Activated CD8-positive, alpha-beta T cell treated with anti-CD3 and anti-CD28 coated beads for 36 hours (primary cell): ENCODE measurements at regions of chr22 and their contacts with region 1.

Region 1: DNA sequence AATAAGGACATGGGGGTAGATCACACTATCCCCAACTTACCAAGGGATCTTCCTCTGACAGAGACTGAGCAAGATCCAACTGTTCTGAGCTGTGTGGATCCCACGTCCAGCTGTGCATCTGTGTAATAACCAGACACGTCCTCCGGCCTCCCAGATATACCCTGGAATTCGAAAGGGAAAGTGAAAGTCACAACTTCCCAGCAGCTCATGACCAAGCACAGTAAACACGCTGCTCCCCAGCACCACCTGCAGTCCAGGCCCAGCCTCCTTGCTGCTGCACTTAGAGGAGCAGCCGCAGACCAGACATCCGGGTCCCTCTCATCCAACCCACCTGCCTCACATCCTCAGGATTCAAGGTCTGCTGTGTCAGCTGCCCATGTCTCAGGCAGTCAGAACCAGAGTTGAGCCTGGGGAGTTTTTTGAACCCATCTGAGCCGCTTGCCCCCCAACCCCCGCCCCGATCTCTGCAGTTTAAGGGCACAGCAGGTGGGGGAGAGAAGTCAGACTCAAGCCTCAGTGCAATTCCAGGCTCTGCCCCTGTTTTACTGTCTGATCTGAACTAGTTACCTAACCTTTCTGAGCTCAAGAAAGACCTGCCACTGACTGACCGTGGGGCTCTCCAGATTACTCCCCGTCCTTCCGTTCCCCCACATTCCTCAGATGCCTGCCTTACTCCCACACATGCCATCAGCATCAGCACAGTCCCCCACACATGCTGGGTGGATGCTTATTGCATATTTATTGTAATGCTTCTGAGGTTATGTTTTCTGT is at the start of gene APOL2:
- DNase-seq: peak; percentile 93
- ATAC-seq: peak; percentile 95
- H3K4me3 Mint-ChIP-seq: peak within 1 kb of the TSS; percentile 98
- H3K27ac Mint-ChIP-seq: peak within 1 kb of the TSS; percentile 97
- H3K4me1 Mint-ChIP-seq: peaks cover 49% of the 10 kb centered on the region
- H3K27me3 Mint-ChIP-seq: no peaks in the 10 kb centered on the region
- CTCF ChIP-seq: peak; percentile 39
- total RNA-seq, gene APOL2: 45.4 to 49.7 TPM

Region 2: GRCh38 chr22:36081023-36081431 is 158.6 kb before region 1 on chr22:
- CTCF ChIA-PET with region 1: no interaction called
- POLR2A ChIA-PET with region 1: no interaction called
- intact Hi-C with region 1: no loop called
- DNase-seq: no peak
- ATAC-seq: no peak
- H3K4me3 Mint-ChIP-seq: no peak overlapping the region
- H3K27ac Mint-ChIP-seq: no peak overlapping the region
- H3K4me1 Mint-ChIP-seq: no peaks in the 10 kb centered on the region
- H3K27me3 Mint-ChIP-seq: no peaks in the 10 kb centered on the region
- CTCF ChIP-seq: no peak

Region 3: DNA sequence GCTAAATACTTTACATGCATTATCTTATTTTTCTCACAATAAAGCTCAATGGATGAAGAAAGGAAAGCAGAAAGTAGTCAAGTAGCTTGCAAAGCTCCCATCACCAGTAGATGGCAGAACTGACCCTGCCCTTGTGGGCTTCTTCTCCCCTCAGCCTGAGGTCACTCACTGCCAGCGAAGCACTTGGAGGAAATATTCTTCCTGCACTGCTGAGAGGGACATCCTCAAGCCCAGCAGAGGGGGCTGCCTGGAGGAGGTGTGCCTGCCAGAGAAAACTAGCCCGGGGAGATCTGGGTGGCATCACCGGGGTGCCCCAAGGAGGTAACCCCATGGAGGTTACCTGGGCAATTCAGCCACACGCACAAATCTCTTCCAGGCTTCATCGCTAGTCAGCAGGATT is 44.6 kb before region 1 on chr22:
- CTCF ChIA-PET with region 1: interaction called, 18 read pairs
- POLR2A ChIA-PET with region 1: interaction called, 3 read pairs
- intact Hi-C with region 1: no loop called
- DNase-seq: peak; percentile 70
- ATAC-seq: peak; percentile 65
- H3K4me3 Mint-ChIP-seq: no peak overlapping the region
- H3K27ac Mint-ChIP-seq: no peak overlapping the region
- H3K4me1 Mint-ChIP-seq: peaks cover 27% of the 10 kb centered on the region
- H3K27me3 Mint-ChIP-seq: no peaks in the 10 kb centered on the region
- CTCF ChIP-seq: peak; percentile 76

Region 4: DNA sequence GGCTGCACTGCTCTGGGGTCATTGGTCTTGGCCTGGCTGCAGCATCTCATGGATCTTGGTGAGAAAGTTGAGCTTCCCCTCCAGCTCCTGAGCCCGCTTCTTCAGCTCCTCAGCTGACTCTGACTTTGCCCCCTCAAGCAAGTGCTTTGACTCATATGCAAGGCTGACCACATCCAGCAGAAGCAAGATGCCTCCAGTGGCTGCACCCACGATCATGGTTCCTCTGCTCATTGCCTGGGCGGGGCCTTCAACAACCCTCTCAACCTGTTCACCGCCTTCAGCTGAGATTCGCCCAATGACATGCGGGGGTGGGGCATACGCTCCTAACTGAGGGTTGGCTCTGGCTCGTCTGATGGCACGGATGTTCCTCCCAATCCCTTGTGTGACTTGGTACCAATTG is 12.2 kb before region 1 on chr22:
- CTCF ChIA-PET with region 1: interaction called, 10 read pairs
- POLR2A ChIA-PET with region 1: interaction called, 10 read pairs
- intact Hi-C with region 1: no loop called
- DNase-seq: peak; percentile 45
- ATAC-seq: peak; percentile 78
- H3K4me3 Mint-ChIP-seq: no peak overlapping the region
- H3K27ac Mint-ChIP-seq: no peak overlapping the region
- H3K4me1 Mint-ChIP-seq: no peaks in the 10 kb centered on the region
- H3K27me3 Mint-ChIP-seq: no peaks in the 10 kb centered on the region
- CTCF ChIP-seq: no peak

Region 5: DNA sequence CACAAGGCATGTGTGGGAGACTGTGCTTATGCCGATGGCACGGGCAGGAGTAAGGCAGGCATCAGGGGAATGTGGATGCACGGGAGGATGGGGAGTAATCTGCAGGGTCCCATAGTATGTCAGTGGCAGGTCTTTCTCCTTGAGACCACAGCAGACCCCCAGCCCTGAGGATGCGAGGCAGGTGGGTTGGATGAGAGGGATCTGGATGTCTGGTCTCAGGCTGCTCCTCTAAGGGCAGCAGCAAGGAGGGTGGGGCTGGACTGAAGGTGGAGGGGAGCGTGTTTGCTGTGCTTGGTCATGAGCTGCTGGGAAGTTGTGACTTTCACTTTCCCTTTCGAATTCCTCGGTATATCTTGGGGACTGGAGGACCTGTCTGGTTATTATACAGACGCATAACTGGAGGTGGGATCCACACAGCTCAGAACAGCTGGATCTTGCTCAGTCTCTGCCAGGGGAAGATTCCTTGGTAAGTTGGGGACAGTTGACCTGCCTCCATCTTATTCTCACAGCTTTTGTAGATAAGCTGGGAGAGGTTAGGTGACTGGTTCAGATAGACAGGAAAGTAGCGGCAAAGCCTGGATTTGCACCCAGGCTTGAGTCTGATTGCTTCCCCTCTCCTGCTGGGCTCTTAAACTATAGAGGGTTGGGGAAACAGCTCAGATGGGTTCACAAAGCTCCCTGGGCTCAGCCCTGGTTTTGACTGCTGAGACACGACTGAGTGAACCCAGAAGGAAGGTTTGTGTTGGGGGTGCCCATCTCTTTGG is 13.3 kb after region 1 on chr22 and contains the start of gene APOL1:
- CTCF ChIA-PET with region 1: interaction called, 19 read pairs
- POLR2A ChIA-PET with region 1: interaction called, 24 read pairs
- intact Hi-C with region 1: no loop called
- DNase-seq: peak; percentile 58
- ATAC-seq: peak; percentile 93
- H3K4me3 Mint-ChIP-seq: peak within 1 kb of the TSS; percentile 83
- H3K27ac Mint-ChIP-seq: peak within 1 kb of the TSS; percentile 94
- H3K4me1 Mint-ChIP-seq: peaks cover 50% of the 10 kb centered on the region
- H3K27me3 Mint-ChIP-seq: no peaks in the 10 kb centered on the region
- CTCF ChIP-seq: no peak
- total RNA-seq, gene APOL1: 13.8 to 17.1 TPM

Region 6: DNA sequence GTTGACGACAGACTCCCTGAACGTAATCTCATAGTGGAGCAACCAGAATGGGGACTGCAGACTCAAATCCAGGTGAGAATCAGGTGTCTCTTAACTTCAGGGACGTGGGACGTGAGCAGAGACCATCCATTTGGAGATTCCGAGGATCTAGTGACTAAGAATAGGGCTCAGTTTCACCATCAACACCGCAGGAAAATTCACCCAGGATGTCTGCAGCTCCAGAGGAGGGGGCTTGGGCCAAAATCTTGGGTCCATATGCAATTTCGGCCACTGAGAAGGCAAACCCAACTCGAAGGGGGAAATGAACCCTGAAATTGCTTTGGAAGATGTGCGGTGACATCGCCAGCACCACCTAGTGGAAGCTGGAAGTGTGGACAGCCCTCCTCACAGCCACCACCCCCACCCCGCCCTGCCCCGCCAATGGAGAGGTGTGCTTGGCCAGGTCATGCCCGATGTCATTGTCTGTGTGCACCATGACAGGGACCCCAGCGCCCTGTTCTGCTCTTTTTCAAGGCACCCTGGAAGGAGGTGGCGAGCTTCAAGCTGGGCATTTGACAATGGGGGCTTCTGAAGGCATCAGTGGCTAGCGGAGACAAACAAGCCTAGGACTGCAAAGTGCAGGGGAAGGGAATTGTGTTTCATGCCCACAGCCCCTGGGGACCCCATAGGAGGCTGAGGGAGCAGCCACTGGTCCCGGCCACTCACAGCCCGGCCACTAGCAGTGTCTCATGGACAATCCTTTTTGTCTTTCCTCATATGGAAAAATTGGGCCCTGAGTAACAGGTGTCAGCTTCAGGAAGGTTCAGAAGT is 38.1 kb after region 1 on chr22:
- CTCF ChIA-PET with region 1: interaction called, 35 read pairs
- POLR2A ChIA-PET with region 1: interaction called, 4 read pairs
- intact Hi-C with region 1: no loop called
- DNase-seq: peak; percentile 83
- ATAC-seq: peak; percentile 88
- H3K4me3 Mint-ChIP-seq: no peak overlapping the region
- H3K27ac Mint-ChIP-seq: peak overlapping the region; percentile 22
- H3K4me1 Mint-ChIP-seq: peaks cover 24% of the 10 kb centered on the region
- H3K27me3 Mint-ChIP-seq: no peaks in the 10 kb centered on the region
- CTCF ChIP-seq: peak; percentile 71

Region 7: DNA sequence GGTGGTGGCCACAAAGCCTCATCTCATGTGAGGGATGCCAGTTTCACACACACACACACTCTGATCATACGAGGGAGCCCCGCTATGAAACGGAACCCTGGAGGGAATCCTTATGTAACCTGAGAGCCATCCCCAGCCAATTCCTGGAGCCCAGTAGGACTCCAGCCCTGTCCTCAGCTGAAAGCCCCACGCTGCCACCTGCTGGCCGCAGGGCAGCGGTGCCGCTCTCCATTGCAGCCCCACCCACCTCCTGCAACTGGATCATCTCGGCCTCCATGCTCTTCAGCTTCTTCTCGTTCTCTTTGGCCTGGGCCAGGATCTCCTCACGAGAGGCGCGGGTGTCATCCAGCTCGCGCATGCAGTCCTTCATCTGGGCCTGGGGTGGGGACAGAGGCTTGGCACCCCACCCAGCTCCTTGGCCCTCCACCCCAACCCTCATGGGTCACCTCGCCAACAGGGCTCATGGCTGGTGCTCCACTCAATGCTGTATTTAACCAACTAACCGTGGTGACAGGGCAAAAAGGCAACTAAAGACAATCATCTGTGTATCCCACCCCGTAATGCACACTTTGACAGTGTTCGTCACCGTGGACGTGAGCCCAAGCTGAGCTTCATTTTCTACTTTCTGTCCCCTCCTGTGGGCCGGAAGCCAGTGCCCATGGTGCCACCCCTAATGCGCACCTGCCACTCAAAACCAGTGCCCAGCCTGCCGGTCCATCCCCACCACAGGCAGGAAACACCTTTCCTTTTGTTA is 47.1 kb after region 1 on chr22:
- CTCF ChIA-PET with region 1: interaction called, 16 read pairs
- POLR2A ChIA-PET with region 1: interaction called, 4 read pairs
- intact Hi-C with region 1: no loop called
- DNase-seq: peak; percentile 75
- ATAC-seq: peak; percentile 91
- H3K4me3 Mint-ChIP-seq: no peak overlapping the region
- H3K27ac Mint-ChIP-seq: peak overlapping the region; percentile 44
- H3K4me1 Mint-ChIP-seq: peaks cover 18% of the 10 kb centered on the region
- H3K27me3 Mint-ChIP-seq: no peaks in the 10 kb centered on the region
- CTCF ChIP-seq: peak; percentile 72

Region 8: DNA sequence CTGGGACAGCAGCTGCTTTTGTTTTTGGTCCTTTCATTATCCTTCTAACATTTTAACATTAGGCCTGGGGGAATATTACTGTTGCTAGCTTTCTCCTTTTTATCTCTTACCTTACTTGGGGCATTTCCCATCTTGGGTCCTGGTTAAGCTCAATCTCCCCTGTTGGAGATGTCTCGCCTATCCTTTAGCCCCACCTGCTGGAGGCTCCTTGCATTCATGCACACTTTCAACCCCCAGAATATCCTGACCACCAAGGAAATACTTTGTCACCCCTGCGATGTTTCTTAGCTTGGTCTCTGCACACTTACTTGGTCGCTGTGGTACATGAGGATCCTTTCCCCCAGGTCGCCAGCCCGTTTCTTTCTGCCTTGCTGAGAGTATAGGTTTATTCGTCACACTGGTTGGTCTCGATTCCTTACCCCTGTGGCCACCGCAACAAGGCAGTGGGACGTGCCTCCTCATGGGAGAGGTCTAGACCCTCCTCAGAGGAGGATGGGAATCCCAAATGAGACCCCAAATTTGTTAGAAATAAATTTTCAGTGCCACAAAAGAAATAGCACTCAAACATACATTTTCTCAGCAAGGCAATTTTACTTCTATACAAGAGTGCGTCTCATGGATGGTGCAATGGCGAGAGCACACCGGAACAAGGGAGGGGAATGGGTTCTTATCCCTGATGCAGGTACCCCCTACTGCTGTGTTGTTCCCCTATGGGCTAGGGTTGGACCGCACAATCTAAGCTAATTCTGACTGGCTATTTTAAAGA is 247.2 kb after region 1 on chr22:
- CTCF ChIA-PET with region 1: interaction called, 12 read pairs
- POLR2A ChIA-PET with region 1: no interaction called
- intact Hi-C with region 1: no loop called
- DNase-seq: peak; percentile 80
- ATAC-seq: no peak
- H3K4me3 Mint-ChIP-seq: no peak overlapping the region
- H3K27ac Mint-ChIP-seq: no peak overlapping the region
- H3K4me1 Mint-ChIP-seq: peaks cover 8% of the 10 kb centered on the region
- H3K27me3 Mint-ChIP-seq: no peaks in the 10 kb centered on the region
- CTCF ChIP-seq: peak; percentile 69